GM10248 (cell line): ENCODE measurements at regions of chr3 and their contacts with region 1.

Region 1: DNA sequence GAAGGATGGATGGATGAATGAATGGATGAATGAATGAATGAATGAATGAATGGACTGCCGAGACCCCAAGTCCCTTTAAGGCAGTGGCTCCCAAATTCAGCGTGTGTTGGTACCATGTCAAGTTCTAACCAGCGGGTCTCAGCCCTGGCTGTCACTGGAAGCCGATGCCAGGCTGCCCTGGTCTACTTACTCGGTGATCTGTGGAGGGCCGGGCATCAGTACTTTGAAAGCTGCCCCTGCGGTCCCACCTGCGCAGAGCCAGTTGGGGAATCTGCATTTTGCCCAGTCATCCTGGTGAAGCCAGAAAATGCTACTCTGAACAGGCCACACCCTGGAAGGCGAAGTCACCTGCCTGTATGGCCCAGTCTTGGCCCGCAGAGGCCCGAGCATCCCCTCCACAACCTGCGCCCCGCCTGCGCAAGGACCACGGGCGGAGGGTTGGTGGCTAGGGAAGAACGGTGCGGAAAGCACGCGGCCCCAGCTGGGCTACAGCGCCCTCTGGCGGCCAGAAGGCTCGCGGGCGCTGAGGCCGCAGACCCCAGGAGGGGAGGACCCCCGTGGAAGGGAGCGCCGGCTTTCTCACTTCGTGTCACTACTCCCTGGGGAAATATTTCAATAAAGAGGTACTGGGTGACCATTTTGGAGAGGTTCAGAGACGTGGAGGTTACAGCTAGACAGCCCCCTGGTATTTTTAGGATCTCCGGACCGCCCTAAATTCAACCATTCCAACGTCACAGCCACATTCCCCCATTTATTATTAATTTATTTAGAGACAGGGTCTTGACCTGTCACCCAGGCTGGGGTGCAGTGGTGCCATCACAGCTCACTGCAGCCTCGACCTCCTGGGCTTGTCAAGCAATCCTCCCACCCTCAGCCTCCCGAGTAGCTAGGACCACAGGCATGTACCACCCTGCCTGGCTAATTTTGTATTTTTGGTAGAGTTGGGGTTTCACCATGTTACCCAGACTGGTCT is 34.9 kb downstream of the PRKCD start:
- DNase-seq: peak; percentile 83
- CTCF ChIP-seq: peak; percentile 97

Region 2: DNA sequence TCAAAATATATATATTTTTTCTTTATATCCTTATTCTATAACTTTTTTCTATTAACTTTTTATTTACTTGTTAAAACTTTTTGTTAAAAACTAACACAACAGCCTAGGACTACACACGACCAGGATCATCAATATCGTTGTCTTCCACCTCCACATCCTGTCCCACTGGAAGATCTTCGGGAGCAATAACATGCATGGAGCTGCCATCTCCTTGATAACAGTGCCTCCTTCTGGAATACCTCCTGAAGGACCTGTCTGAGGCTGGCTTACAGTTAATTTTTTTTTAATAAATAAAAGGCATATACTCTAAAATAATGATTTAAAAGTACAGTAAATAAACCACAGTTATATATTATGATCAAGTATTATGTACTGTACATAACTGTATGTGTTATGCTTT is 208.9 kb before region 1 on chr3:
- CTCF ChIA-PET with region 1: no interaction called
- POLR2A ChIA-PET with region 1: no interaction called
- DNase-seq: no peak
- CTCF ChIP-seq: peak; percentile 19

Region 3: DNA sequence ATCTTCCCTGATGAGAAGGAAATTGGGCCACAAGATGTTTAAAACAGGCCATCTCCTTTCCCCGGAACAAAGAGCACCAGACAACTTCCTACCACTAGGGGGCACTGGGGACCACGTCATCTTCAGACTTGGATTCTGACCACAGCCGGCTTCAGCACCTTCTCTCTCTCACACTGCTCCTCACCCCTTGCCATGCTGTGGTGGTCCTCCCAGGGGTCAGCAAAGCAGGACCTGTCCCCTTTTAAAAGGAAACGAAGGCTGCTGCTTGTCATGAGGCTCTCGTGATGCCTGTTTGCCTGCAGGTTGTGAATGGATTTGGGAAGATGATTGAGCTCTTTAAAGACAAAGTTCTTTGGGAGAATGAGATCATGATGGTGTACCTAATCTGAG is 81.9 kb before region 1 on chr3:
- CTCF ChIA-PET with region 1: interaction called, 253 read pairs
- POLR2A ChIA-PET with region 1: no interaction called
- DNase-seq: peak; percentile 84
- CTCF ChIP-seq: peak; percentile 89

Region 4: GRCh38 chr3:53140847-53141845 is 54.7 kb before region 1 on chr3:
- CTCF ChIA-PET with region 1: interaction called, 236 read pairs
- POLR2A ChIA-PET with region 1: interaction called, 3 read pairs
- DNase-seq: no peak
- CTCF ChIP-seq: no peak

Region 5: GRCh38 chr3:53160660-53161449 is 35.0 kb before region 1 on chr3 and contains the start of gene PRKCD:
- CTCF ChIA-PET with region 1: interaction called, 66 read pairs
- POLR2A ChIA-PET with region 1: interaction called, 6 read pairs
- DNase-seq: peak; percentile 96
- CTCF ChIP-seq: no peak

Region 6: DNA sequence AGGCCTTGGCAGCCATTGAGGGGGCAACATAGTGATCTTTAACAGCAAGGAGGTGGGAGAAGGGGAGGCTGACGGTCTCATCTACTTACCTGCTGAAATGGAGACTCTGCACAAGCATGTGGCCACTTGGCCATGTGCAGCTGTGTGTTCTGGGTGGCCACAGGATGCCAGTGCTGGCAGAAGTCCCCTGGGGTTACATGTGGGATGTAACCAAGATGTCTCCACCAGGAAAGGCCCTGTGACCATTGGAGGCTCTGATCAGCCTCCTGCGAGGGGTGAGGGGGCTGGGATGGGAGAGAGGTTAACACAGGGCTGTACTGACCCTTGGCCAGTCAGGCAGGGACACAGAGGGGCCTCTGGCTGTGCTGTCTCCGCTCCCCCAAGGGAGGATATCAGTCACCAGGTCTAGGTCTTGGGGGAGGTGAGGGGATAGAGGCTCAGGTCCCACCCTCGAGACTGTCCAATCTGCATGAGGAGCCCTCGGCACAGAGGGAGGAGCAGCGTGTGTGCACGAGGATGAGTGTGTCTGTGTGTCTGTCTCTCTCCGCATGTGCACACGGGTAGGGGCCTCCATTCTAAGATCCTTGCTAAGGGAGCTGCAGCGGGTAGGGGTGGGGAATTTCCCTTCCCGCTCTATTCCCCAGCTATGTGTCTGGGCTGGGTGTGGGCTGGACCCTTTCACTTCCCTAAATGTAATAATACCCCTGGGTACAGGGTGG is 15.4 kb before region 1 on chr3:
- CTCF ChIA-PET with region 1: interaction called, 63 read pairs
- POLR2A ChIA-PET with region 1: no interaction called
- DNase-seq: peak; percentile 89
- CTCF ChIP-seq: no peak

Region 7: DNA sequence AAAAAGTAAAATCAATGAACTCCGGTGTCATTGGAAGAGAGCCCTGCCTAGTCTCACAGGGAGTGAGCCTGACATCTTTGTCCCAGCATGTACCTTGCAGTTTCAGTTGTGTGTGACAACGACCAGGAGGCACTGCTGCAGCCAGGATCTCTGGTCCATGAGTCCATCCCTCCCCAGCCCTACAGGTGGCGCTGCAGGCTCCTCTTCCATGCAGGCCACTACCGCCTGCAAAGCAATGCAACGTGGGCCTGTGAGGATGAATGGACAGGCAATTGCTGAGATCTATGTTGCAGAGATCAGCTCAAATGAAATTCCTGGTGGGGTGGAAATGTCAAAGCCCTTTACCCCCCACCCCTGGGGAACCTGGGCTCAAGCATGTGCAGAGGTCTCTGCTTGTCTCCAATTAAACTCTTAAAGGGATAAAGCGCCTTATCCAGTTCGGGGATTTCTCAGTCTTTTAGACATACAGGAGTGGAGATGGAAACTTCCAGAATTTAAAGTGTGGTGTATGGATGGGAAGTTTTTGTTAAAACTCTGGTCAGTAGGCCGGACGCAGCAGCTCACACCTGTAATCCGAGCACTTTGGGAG is 24.1 kb after region 1 on chr3:
- CTCF ChIA-PET with region 1: interaction called, 22 read pairs
- POLR2A ChIA-PET with region 1: no interaction called
- DNase-seq: peak; percentile 86
- CTCF ChIP-seq: peak; percentile 80